Activated CD4-positive, alpha-beta T cell treated with anti-CD3 and anti-CD28 coated beads, Interleukin-2, amount 10 ng/mL, durations not matched to agents 24 days and 14 days (primary cell): ENCODE measurements at regions of chr3 and their contacts with region 1.

Region 1: GRCh38 chr3:45688882-45689756 is at the start of gene SACM1L:
- DNase-seq: peak; percentile 99
- H3K4me3 Mint-ChIP-seq: peak within 1 kb of the TSS; percentile 87
- H3K27ac Mint-ChIP-seq: peak within 1 kb of the TSS; percentile 94
- H3K4me1 Mint-ChIP-seq: peaks cover 46% of the 10 kb centered on the region
- H3K27me3 Mint-ChIP-seq: peaks cover 4% of the 10 kb centered on the region
- total RNA-seq, gene SACM1L: 88.0 and 91.7 TPM in 2 replicates

Region 2: GRCh38 chr3:45772341-45773035 is 83.4 kb after region 1 on chr3:
- intact Hi-C with region 1: no loop called
- DNase-seq: no peak
- H3K4me3 Mint-ChIP-seq: no peak overlapping the region
- H3K27ac Mint-ChIP-seq: no peak overlapping the region
- H3K4me1 Mint-ChIP-seq: peaks cover 11% of the 10 kb centered on the region
- H3K27me3 Mint-ChIP-seq: peaks cover 51% of the 10 kb centered on the region

Region 3: DNA sequence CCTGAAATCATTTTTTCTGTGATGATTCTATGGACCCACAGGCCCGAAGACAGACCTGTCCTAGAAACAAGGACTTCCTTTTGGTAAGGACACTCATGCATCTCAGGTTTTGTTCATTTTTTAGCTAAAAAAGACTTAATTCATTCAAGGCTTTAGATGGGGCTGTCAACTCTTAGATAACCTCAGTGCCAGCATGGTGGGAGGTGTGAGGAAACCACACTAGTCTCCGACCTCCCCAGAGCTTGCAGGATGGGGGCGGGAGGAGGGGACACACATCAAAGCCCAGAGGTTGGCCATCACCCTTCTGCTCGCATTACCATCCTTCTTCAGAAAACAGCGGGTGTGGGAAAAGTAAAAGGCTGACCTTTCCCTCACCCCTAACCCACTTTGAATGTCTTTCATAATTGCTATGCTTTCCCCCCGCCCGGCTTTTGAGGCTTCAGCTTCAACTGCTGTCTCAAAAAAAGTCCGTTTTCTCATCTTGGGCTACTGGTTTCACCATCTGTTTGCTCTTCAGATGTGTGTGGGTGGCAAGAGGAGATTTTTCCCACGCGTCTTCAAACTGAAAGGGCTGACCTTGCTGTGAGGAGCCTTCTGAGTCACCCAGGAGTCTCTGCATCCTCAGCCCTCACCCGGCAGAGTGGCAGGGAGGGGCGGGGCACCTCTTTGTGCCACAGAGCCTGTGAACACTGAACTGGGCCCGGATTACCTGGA is 226.6 kb after region 1 on chr3:
- intact Hi-C with region 1: loop called (anchors 2 kb)
- DNase-seq: peak; percentile 89
- H3K4me3 Mint-ChIP-seq: peak overlapping the region; percentile 23
- H3K27ac Mint-ChIP-seq: peak overlapping the region; percentile 49
- H3K4me1 Mint-ChIP-seq: peaks cover 29% of the 10 kb centered on the region
- H3K27me3 Mint-ChIP-seq: peaks cover 25% of the 10 kb centered on the region